ENCODE measurements at regions of chr10 and their contacts with region 1.

Region 1: GRCh38 chr10:117442944-117443685 is 67.9 kb upstream of the PDZD8 start:
- DNase-seq: peak; percentile 74 to 97
- H3K4me3 ChIP-seq: peak overlapping the region in 1 of 2 donors; percentile 2
- H3K27ac ChIP-seq: peak overlapping the region; percentile 84
- H3K4me1 ChIP-seq: peaks cover 0 to 20% of the 10 kb centered on the region in 2 donors
- H3K27me3 ChIP-seq: no peaks in the 10 kb centered on the region
- CTCF ChIP-seq: peak; percentile 84 to 93 (median 89)

Region 2: DNA sequence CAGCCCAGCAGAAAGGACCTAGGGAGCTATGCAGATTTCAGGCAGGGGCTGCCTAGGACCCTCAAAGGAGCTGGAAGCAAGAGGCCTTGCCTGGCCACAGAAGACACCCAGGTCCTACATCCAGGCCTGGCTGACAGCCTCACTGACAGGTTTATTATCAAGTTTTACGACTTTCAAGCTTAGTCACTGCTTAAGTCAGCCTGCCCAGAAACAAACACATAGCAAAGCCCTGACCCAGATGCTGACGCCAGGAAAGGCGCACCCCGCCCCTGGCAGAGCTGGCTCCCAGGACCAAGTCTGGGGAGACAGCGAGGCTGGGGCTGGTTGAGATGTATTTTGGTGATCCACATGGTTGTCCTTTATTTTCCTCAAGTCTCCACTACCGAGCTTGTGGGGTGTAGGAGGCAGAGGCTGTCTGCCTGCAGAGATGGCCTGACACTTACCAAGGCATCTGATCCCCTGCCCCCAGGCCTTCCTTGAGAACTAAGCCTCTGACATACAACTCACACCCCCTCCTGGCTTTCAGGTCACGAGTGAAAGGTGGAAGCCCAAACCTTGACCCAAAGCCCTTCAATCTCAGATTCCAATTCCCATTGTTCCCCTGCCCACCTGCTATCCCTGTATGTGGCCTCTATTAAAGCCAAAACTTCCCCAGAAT is 18.8 kb after region 1 on chr10:
- intact Hi-C with region 1: loop called (anchors 1 kb)
- DNase-seq: peak; percentile 48 to 92
- H3K4me3 ChIP-seq: no peak overlapping the region
- H3K27ac ChIP-seq: peak overlapping the region; percentile 83 to 85
- H3K4me1 ChIP-seq: peaks cover 3 to 20% of the 10 kb centered on the region in 2 donors
- H3K27me3 ChIP-seq: no peaks in the 10 kb centered on the region
- CTCF ChIP-seq: no peak

Region 3: GRCh38 chr10:117496616-117497028 is 53.5 kb after region 1 on chr10:
- intact Hi-C with region 1: loop called (anchors 1 kb)
- DNase-seq: peak; percentile 10 to 88
- H3K4me3 ChIP-seq: no peak overlapping the region
- H3K27ac ChIP-seq: no peak overlapping the region
- H3K4me1 ChIP-seq: no peaks in the 10 kb centered on the region
- H3K27me3 ChIP-seq: no peaks in the 10 kb centered on the region
- CTCF ChIP-seq: peak; percentile 86 to 97 (median 95)

Region 4: GRCh38 chr10:118046395-118047156 is 603.5 kb after region 1 on chr10 and contains the start of gene RAB11FIP2:
- intact Hi-C with region 1: loop called (anchors 2 kb)
- DNase-seq: peak; percentile 82 to 98
- H3K4me3 ChIP-seq: peak within 1 kb of the TSS; percentile 75 to 96
- H3K27ac ChIP-seq: peak within 1 kb of the TSS; percentile 91 to 98
- H3K4me1 ChIP-seq: peaks cover 2 to 22% of the 10 kb centered on the region in 2 donors
- H3K27me3 ChIP-seq: no peaks in the 10 kb centered on the region
- CTCF ChIP-seq: peak in 1 of 3 experiments; percentile 17
- total RNA-seq, gene RAB11FIP2: 2.8 TPM

Region 5: DNA sequence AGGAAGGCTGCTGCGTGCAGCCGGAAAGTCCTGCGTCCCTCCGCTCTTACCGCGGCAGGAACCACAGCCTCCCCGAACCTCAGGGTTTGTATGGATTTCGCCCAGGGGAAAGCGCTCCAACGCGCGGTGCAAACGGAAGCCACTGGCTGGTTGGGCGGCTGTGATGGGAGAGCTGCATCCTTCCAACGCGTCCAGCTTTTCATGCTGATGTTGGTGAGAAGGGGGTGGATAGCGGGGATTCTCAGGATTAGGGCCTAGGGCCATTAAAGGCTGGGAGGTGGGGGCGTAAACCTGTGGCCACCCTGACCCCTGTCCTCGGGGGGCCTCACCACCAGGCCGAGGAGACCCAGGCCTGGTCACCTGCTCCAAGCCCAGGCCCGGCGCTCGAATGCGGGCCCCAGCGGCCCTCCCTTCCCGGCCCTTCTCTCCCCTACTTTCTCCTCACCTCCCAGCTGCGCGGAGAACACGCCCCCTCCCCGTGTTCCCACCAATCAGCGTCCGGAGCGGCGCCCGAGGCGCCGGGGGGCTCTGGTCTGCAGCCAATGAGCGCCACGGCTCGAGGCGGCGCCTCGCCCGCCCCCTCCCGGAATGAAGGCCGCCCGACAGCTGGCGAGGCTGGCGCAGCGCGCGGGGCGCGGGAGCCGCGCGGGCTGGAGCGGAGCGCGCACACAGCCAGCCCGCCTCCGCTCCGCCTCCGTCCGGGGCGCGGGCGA is 1585.9 kb after region 1 on chr10:
- intact Hi-C with region 1: loop called (anchors 10 kb)
- DNase-seq: peak in 1 of 2 donors; percentile 94
- H3K4me3 ChIP-seq: peak overlapping the region; percentile 73 to 88
- H3K27ac ChIP-seq: peak overlapping the region; percentile 80 to 85
- H3K4me1 ChIP-seq: peaks cover 20 to 30% of the 10 kb centered on the region in 2 donors
- H3K27me3 ChIP-seq: no peaks in the 10 kb centered on the region
- CTCF ChIP-seq: peak in 2 of 3 experiments; percentile 27 to 30

Measured in ascending aorta (tissue), 2 donors.